K562 (cell line): ENCODE measurements at regions of chr7 and their contacts with region 1.

Region 1: DNA sequence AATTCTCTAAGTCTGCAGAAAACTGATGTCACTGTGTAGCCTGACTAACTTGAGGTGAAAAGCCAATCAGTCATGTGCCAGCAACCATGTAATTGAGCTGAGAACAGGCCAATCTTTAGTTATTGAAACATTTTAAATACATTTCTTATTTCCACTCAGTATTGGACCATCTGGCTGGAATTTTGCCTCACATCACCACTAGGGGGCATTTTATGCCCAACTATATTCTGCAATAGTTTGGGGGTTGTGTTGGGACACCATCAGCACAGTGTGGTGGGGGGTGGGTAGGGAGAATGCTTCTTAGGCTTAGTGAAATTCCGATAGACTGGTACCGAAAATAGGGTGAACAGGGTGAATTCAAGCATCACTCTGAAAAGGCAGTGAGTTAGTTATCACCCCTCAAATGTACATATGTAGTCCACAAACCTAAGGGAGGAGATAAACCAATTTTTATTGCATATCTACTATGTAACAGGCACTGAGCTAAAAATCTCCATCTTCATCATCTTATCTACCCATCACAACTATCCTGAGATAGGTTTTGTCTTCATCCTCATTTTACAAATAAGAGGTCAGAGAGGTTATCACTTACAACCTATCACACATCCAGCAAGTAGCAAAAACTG is 17.8 kb downstream of the NPSR1 start:
- DNase-seq: peak; percentile 16 to 31 (median 21)
- ATAC-seq: peak; percentile 73
- H3K4me3 ChIP-seq: no peak overlapping the region
- H3K27ac ChIP-seq: no peak overlapping the region
- H3K4me1 ChIP-seq: no peaks in the 10 kb centered on the region
- H3K27me3 ChIP-seq: no peaks in the 10 kb centered on the region
- CTCF ChIP-seq: peak; percentile 16 to 49 (median 44); a peak in 4 of 6 replicates
- EP300 ChIP-seq: no peak
- POLR2A ChIP-seq: no peak
- RAD21 ChIP-seq: peak in 1 of 2 experiments; percentile 47; a peak in 2 of 4 replicates

Region 2: GRCh38 chr7:34900891-34901513 is 225.1 kb after region 1 on chr7:
- CTCF ChIA-PET with region 1: no interaction called
- POLR2A ChIA-PET with region 1: no interaction called
- in situ Hi-C with region 1: no loop called
- intact Hi-C with region 1: loop called (anchors 5 kb)
- DNase-seq: peak; percentile 44 to 63 (median 53)
- ATAC-seq: peak; percentile 94
- H3K4me3 ChIP-seq: no peak overlapping the region
- H3K27ac ChIP-seq: no peak overlapping the region
- H3K4me1 ChIP-seq: no peaks in the 10 kb centered on the region
- H3K27me3 ChIP-seq: peaks cover 0 to 6% of the 10 kb centered on the region in 2 experiments; a peak in 1 of 5 replicates
- CTCF ChIP-seq: peak; percentile 54 to 62 (median 59); a peak in 5 of 6 replicates
- EP300 ChIP-seq: no peak
- POLR2A ChIP-seq: no peak
- RAD21 ChIP-seq: peak; percentile 29 to 47; a peak in 3 of 4 replicates

Region 3: GRCh38 chr7:35985126-35985754 is 1309.4 kb after region 1 on chr7:
- CTCF ChIA-PET with region 1: no interaction called
- POLR2A ChIA-PET with region 1: no interaction called
- in situ Hi-C with region 1: no loop called
- intact Hi-C with region 1: no loop called
- DNase-seq: peak; percentile 70 to 74 (median 72)
- ATAC-seq: peak; percentile 99
- H3K4me3 ChIP-seq: no peak overlapping the region
- H3K27ac ChIP-seq: no peak overlapping the region
- H3K4me1 ChIP-seq: peaks cover 0 to 5% of the 10 kb centered on the region in 2 experiments; a peak in 2 of 5 replicates
- H3K27me3 ChIP-seq: peaks cover 18 to 59% of the 10 kb centered on the region in 2 experiments
- CTCF ChIP-seq: peak; percentile 86 to 93 (median 90)
- EP300 ChIP-seq: no peak
- POLR2A ChIP-seq: no peak
- RAD21 ChIP-seq: peak; percentile 98